ENCODE measurements at regions of chrX and their contacts with region 1.

Region 1: GRCh38 chrX:78092296-78092695 is 11.8 kb upstream of the PGK1 start:
- DNase-seq: no peak
- CTCF ChIP-seq: peak; percentile 31

Region 2: DNA sequence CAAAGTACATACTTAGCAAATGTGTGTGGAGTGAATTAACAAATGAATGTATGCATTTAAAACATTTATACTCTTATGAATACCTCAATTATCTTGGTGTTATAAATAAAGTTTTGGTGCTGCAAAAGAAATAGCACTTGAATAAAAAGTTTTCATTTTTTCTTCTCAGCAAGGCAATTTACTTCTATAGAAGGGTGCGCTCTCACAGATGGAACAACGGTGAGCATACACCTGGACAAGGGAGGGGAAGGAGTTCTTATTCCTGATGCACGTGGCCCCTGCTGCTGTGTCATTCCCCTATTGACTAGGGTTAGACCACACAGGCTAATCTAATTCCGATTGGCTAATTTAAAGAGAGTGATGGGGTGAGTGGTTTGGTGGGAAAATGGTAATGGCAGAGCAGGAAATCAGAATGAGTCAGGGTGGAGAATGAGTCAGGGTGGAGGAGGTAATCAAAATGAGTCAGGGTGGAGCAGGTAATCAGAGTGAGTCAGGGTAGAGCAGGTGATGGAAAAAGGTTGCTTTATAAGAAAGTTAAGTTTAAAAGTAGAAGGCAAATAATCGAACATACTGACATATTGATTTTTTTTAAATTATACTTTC is 16.4 kb before region 1 on chrX:
- CTCF ChIA-PET with region 1: interaction called, 10 read pairs
- POLR2A ChIA-PET with region 1: no interaction called
- DNase-seq: no peak
- CTCF ChIP-seq: no peak

Region 3: GRCh38 chrX:78129714-78130113 is 37.4 kb after region 1 on chrX:
- CTCF ChIA-PET with region 1: no interaction called
- POLR2A ChIA-PET with region 1: no interaction called
- DNase-seq: no peak
- CTCF ChIP-seq: no peak

Measured in GM10248 (cell line).